ENCODE measurements at regions of chr4 and their contacts with region 1.

Region 1: DNA sequence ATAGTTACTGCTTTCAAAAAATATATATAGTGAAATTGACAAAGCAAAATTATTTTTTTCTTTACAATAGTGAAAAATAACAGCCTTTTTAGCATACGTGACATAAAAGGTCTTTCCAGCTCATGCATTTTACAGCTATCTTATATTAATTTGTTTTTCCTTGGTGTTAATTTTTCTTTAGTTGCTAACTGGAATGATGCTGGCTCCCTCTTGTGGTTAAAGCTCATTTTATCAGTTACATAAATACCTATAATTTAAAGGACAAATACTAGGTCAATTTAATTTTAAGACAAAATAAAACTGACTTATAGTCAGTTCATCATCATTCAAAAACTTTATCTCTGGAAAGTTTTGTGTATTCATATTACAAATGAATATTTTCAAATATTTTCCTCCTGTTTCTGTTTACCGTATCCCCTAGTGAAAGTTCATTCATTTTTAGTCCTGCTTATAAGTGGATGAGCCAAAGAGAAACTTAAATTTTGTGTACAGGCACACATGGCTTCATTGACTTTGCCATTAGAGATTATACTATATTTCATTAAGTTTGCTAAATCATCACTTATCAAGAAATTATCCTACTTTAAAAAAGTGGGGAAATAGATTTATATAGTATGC is 9.9 kb upstream of the ANAPC4 start:
- DNase-seq: no peak
- ATAC-seq: no peak
- H3K4me3 ChIP-seq: no peak overlapping the region
- H3K27ac ChIP-seq: no peak overlapping the region
- H3K4me1 ChIP-seq: peaks cover under 1% of the 10 kb centered on the region
- H3K27me3 ChIP-seq: no peaks in the 10 kb centered on the region
- CTCF ChIP-seq: peak; percentile 40 to 63 (median 58)
- POLR2A ChIP-seq: no peak

Region 2: DNA sequence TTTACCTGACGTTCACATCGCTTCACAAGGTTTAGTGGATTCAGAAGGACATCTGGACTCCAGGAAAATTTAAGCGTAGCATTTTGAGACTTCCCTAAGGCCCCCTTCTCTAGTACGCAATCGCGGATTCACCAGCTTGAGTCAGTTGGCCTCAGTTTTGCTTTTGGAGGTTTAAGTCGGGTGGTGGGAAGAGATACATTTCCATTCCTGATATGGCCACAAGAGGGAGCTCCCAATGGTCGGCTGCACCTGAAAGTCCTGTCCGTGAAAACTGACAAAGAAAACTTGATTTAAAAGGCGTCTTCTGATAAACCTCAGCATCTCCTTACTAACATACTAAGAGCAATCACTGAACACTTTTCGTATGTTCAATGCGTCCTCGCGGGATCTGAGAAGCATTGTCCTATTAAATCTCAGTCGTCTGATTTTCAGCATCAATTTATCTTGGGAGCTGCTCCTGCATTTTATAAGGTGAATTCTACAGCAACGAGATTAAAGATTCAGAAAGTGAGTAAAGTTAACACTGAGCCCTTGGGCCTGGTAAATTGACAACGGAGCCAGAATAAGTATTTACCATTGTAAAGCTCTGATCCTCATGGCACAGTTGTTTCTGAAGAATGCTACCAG is 386.9 kb before region 1 on chr4:
- intact Hi-C with region 1: loop called (anchors 10 kb)
- DNase-seq: peak; percentile 63 to 71 (median 65)
- ATAC-seq: peak; percentile 74
- H3K4me3 ChIP-seq: no peak overlapping the region
- H3K27ac ChIP-seq: peak overlapping the region in 2 of 4 donors; percentile 11 to 76
- H3K4me1 ChIP-seq: no peaks in the 10 kb centered on the region
- H3K27me3 ChIP-seq: no peaks in the 10 kb centered on the region
- CTCF ChIP-seq: peak; percentile 66 to 87 (median 82)
- POLR2A ChIP-seq: no peak

Measured in body of pancreas (tissue), 4 donors.